ENCODE measurements at regions of chr11 and their contacts with region 1.

Region 1: GRCh38 chr11:78478536-78478935 is 60.9 kb upstream of the GAB2 start:
- DNase-seq: no peak
- ATAC-seq: no peak
- H3K4me3 Mint-ChIP-seq: no peak overlapping the region
- H3K27ac Mint-ChIP-seq: no peak overlapping the region
- H3K4me1 Mint-ChIP-seq: peaks cover 7% of the 10 kb centered on the region
- H3K27me3 Mint-ChIP-seq: no peaks in the 10 kb centered on the region
- CTCF ChIP-seq: no peak

Region 2: DNA sequence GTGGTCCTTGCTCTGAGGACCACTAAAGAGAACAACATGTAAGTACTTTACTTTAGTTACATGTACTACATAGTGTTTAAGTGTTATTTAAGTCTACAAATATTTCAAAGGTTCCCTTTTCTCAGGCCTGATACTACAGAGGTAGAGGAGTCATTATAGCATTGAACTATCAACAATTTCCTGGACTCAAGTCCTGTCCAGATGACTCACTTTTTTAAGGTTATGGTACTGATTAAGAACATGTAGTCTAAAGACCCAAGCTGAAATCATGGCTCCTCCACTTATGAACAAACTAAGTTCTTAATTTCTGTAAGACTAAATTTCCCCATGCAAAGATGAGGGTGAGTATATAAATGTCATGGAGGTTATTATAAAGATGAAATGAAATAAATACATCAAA is 21.4 kb after region 1 on chr11:
- CTCF ChIA-PET with region 1: no interaction called
- POLR2A ChIA-PET with region 1: no interaction called
- intact Hi-C with region 1: loop called (anchors 2 kb)
- DNase-seq: no peak
- ATAC-seq: no peak
- H3K4me3 Mint-ChIP-seq: no peak overlapping the region
- H3K27ac Mint-ChIP-seq: no peak overlapping the region
- H3K4me1 Mint-ChIP-seq: peaks cover 6% of the 10 kb centered on the region
- H3K27me3 Mint-ChIP-seq: no peaks in the 10 kb centered on the region
- CTCF ChIP-seq: no peak

Region 3: GRCh38 chr11:79493555-79494171 is 1015.1 kb after region 1 on chr11:
- CTCF ChIA-PET with region 1: no interaction called
- POLR2A ChIA-PET with region 1: no interaction called
- intact Hi-C with region 1: no loop called
- DNase-seq: peak; percentile 40
- ATAC-seq: peak; percentile 77
- H3K4me3 Mint-ChIP-seq: no peak overlapping the region
- H3K27ac Mint-ChIP-seq: no peak overlapping the region
- H3K4me1 Mint-ChIP-seq: no peaks in the 10 kb centered on the region
- H3K27me3 Mint-ChIP-seq: peaks cover 9% of the 10 kb centered on the region
- CTCF ChIP-seq: no peak

Measured in activated B cell treated with CpG ODN at 0.5 μM for 24 hours (primary cell).